Activated naive CD4-positive, alpha-beta T cell treated with anti-CD3 and anti-CD28 coated beads for 36 hours (primary cell): ENCODE measurements at regions of chr2 and their contacts with region 1.

Region 1: DNA sequence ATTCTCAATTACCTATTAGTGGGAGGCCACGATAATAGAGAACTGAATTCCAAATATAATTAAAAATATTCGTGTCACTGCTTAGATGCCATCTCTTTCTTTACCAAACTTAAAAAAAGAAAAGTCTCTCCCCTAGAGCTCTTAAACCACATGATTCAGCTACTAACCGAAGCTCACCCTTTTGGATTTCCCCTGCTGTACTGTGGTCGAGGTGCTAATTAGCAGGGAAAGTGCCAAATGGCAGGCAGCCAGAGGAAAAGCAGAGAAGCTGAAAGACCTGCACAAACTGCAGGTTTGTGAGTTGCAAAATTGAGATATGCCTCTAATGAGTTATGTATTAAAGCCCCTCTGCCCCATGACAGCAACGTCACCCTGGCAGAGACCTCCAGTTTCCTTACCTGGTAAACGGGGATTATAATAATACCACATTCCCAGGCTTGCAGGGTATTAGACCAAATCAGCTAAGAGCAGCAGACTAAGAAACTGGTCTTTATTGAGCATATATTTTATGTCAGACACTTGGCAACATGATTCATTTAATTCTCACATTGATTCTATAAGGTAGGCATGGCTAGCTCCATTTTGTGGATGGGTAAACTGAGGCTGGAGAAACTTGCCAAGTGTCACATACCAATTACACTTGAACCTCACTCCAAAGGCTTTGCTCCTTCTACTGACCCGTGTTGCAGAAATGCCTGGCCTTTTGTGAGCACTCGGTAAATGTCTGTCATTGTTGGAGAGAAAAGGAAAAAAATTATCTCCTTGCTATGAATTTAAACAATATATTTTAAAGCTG is 259.7 kb downstream of the LPIN1 start:
- DNase-seq: peak; percentile 92
- H3K4me3 Mint-ChIP-seq: no peak overlapping the region
- H3K27ac Mint-ChIP-seq: no peak overlapping the region
- H3K4me1 Mint-ChIP-seq: peaks cover 22% of the 10 kb centered on the region
- H3K27me3 Mint-ChIP-seq: peaks cover 52% of the 10 kb centered on the region

Region 2: DNA sequence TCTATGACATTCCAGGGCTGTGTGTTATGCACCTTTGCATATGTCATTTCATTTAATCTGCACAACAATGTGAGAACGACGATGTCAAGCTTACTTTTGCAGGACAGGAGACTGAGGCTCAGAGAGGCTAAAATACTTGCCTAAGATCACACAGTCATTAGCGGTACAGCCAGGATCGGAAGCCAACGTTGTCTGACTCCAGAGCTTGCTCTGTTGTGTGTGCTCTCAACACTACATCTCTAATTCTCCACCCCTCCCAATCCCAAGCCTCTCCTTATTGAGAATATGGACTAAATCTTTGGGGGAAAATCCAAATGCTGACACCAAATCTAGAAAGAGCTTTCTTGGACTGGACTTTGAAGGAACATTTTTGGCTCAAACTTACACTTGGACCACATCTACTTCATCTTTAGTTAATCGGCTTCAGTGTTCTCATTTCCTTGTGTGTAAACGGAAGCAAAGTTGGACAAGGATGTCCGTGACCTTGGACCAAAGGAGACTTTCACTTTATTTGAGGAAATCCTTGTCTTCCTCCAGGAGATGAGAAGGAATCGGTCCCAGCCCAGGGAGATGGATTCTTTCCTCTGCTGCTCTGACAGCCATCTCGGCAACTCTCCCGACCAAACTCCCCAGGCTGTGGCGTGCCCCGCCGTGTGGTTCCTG is 17.3 kb before region 1 on chr2:
- CTCF ChIA-PET with region 1: no interaction called
- intact Hi-C with region 1: no loop called
- DNase-seq: no peak
- H3K4me3 Mint-ChIP-seq: no peak overlapping the region
- H3K27ac Mint-ChIP-seq: no peak overlapping the region
- H3K4me1 Mint-ChIP-seq: no peaks in the 10 kb centered on the region
- H3K27me3 Mint-ChIP-seq: peaks cover 5% of the 10 kb centered on the region

Region 3: DNA sequence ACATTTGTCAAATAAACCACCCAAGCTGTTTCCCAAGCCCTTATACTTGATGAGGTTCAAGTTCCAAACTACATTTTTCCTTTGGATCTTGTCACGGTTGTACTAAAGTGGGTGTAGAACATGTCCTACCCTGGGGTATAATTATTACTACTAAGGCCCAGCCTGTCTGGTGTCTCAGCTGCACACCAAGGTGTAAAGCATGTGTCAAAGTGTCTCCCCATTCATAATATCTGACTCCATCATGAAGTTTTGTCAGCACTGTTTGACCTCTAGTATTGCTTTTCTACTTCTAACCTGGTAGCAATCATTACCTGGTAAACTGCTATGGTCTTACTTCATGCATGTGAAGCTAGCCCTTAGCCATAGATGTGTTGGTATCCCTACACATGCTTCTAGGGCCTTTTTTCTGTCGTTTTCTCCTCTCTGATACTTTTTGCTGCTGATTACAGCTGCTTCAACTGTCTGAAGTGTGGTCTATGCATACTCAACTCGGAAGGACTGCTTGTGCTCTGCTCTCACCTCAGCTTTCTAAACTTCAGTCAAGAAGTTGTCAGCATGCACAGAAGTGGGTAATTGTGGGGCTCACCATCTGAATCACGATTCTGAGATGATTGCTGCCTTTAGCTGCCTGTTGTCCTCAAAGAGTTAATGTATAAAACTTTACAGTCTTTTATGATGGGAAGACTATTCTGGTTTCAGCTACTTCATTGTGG is 264.9 kb after region 1 on chr2:
- CTCF ChIA-PET with region 1: no interaction called
- intact Hi-C with region 1: loop called (anchors 5 kb)
- DNase-seq: peak; percentile 53
- H3K4me3 Mint-ChIP-seq: no peak overlapping the region
- H3K27ac Mint-ChIP-seq: no peak overlapping the region
- H3K4me1 Mint-ChIP-seq: peaks cover 20% of the 10 kb centered on the region
- H3K27me3 Mint-ChIP-seq: no peaks in the 10 kb centered on the region

Region 4: DNA sequence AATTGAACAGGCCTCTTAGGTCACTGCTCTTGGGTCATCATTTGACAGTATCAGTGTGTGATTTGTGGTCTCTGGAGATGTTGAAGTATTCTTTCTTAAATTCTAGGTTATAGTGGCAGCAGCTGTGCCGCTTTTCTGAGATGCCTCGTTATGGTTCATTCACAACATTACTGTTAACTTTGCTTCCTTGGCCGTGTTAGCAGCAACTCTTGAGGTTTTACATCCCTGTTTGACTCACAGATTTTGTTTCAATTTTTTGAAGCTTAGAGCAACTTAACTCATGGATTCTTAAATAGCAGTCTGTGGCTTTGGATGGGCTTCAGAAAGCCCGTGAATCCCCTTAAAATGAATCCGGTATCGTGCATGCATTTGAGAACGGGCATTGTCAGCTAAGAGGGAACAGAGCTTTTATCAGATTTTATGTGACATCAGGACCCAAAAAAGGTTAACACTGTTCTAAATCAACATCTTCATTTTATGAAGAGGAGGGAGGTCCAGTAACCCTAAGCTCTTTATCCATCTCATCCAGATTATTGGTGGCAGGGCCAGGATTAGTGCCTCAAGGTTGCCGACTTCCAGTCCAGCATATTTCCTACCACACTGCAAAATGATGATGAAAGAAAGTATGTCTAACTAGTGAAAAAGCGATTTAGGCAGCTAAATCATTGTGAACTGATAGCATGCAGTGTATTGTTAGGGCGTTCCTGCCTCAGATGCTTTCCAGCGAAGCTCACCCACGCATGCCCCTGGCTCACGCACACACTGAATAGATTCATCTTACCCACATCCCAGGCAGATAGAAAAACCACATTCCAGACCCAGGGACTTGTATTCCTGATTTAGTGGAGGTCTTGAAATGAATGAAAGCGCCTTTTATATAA is 715.7 kb after region 1 on chr2:
- CTCF ChIA-PET with region 1: no interaction called
- intact Hi-C with region 1: loop called (anchors 2 kb)
- DNase-seq: peak; percentile 48
- H3K4me3 Mint-ChIP-seq: peak overlapping the region; percentile 54
- H3K27ac Mint-ChIP-seq: peak overlapping the region; percentile 46
- H3K4me1 Mint-ChIP-seq: peaks cover 77% of the 10 kb centered on the region
- H3K27me3 Mint-ChIP-seq: peaks cover 1% of the 10 kb centered on the region

Region 5: GRCh38 chr2:12819103-12819475 is 813.0 kb after region 1 on chr2:
- CTCF ChIA-PET with region 1: no interaction called
- intact Hi-C with region 1: no loop called
- DNase-seq: no peak
- H3K4me3 Mint-ChIP-seq: no peak overlapping the region
- H3K27ac Mint-ChIP-seq: no peak overlapping the region
- H3K4me1 Mint-ChIP-seq: peaks cover 45% of the 10 kb centered on the region
- H3K27me3 Mint-ChIP-seq: no peaks in the 10 kb centered on the region